ENCODE measurements at regions of chr20 and their contacts with region 1.

Region 1: DNA sequence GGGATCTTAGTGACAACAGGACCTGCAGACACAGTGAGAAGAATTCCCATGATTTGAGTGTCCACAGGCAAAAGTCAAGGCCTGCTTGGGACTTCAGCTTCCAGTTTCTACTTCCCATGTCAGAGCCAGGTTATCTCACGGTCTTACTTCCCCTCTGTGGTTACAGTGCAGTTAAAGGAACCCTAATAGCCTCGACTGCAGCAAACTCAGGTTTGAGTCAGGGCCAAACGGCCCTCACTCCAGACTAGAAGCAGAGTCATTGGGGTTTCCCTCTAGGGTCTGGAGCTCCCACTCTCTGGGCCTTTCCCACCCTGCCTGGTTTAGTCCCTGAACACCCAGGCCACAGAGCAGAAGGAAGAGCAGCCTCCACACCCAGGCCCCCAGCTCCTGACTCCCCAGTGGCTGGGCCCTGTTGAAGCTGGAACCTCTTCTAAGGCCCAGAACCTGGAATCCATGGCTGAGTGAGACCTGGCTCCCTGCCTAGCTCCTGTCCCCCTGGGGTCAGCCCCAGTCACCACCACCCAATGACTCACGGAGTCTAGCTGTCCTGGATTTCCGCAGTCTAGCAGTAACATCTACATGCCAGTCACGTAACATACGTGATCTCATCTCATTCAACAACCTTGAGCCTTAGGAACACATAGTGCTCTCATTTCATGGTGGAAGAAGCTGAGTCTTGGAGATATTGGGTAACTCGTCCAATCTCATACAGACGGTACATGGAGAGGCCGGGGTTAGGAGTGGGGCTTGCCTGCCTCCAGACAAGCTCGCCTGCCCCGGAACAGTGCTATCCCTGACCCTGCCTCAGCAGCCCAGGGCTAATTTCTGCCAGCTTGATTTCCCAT is 9.2 kb upstream of the GHRH start:
- DNase-seq: no peak
- H3K4me3 Mint-ChIP-seq: no peak overlapping the region
- H3K27ac Mint-ChIP-seq: no peak overlapping the region
- H3K4me1 Mint-ChIP-seq: no peaks in the 10 kb centered on the region
- H3K27me3 Mint-ChIP-seq: peaks cover 25% of the 10 kb centered on the region

Region 2: GRCh38 chr20:36941401-36941835 is 329.4 kb before region 1 on chr20:
- CTCF ChIA-PET with region 1: no interaction called
- DNase-seq: no peak
- H3K4me3 Mint-ChIP-seq: peak overlapping the region; percentile 30
- H3K27ac Mint-ChIP-seq: peak overlapping the region; percentile 47
- H3K4me1 Mint-ChIP-seq: peaks cover 79% of the 10 kb centered on the region
- H3K27me3 Mint-ChIP-seq: no peaks in the 10 kb centered on the region

Region 3: GRCh38 chr20:37249304-37249703 is 21.5 kb before region 1 on chr20:
- CTCF ChIA-PET with region 1: no interaction called
- DNase-seq: no peak
- H3K4me3 Mint-ChIP-seq: no peak overlapping the region
- H3K27ac Mint-ChIP-seq: no peak overlapping the region
- H3K4me1 Mint-ChIP-seq: no peaks in the 10 kb centered on the region
- H3K27me3 Mint-ChIP-seq: peaks cover 5% of the 10 kb centered on the region

Region 4: GRCh38 chr20:37534401-37535157 is 263.8 kb after region 1 on chr20:
- CTCF ChIA-PET with region 1: interaction called, 19 read pairs
- DNase-seq: peak; percentile 63
- H3K4me3 Mint-ChIP-seq: no peak overlapping the region
- H3K27ac Mint-ChIP-seq: no peak overlapping the region
- H3K4me1 Mint-ChIP-seq: peaks cover 5% of the 10 kb centered on the region
- H3K27me3 Mint-ChIP-seq: peaks cover 11% of the 10 kb centered on the region